Dendritic cell treated with granulocyte-macrophage colony-stimulating factor and Interleukin-4, amounts not matched to agents 40 ng/mL and 50 ng/mL, for 4 days (primary cell): ENCODE measurements at regions of chr13 and their contacts with region 1.

Region 1: GRCh38 chr13:27251166-27252091 is at the start of gene RPL21:
- H3K4me3 Mint-ChIP-seq: peak within 1 kb of the TSS; percentile 88
- H3K27ac Mint-ChIP-seq: peak within 1 kb of the TSS; percentile 97
- H3K4me1 Mint-ChIP-seq: peaks cover 25% of the 10 kb centered on the region
- H3K27me3 Mint-ChIP-seq: no peaks in the 10 kb centered on the region

Region 2: GRCh38 chr13:27171827-27172494 is 79.5 kb before region 1 on chr13:
- intact Hi-C with region 1: loop called (anchors 1 kb)
- H3K4me3 Mint-ChIP-seq: peak overlapping the region; percentile 77
- H3K27ac Mint-ChIP-seq: peak overlapping the region; percentile 89
- H3K4me1 Mint-ChIP-seq: peaks cover 56% of the 10 kb centered on the region
- H3K27me3 Mint-ChIP-seq: no peaks in the 10 kb centered on the region